PC-3 (cell line): ENCODE measurements at regions of chr7 and their contacts with region 1.

Region 1: DNA sequence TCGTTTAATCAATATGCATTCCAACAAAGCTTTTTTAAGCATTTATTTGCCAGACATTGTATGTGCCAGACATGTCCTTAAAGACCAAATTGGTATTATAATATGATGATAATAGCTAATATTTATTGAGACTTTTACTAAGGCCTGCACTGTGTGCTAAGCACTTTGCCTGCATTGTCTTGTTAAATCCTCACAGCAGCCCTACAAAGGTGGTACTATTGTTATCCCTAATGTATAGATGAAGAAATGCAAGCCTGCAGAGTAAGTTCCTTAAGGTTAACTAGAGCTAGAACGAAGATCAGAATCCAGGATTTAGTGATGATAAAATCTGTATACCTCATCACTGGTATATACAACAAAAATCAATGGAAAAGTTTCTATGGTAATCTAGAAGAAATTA is 5.3 kb upstream of the CAPZA2 start:
- DNase-seq: no peak
- ATAC-seq: no peak
- H3K4me3 ChIP-seq: no peak overlapping the region
- H3K27ac ChIP-seq: no peak overlapping the region
- H3K4me1 ChIP-seq: peaks cover 11% of the 10 kb centered on the region
- H3K27me3 ChIP-seq: no peaks in the 10 kb centered on the region
- CTCF ChIP-seq: no peak

Region 2: GRCh38 chr7:116786791-116787443 is 70.1 kb before region 1 on chr7:
- CTCF ChIA-PET with region 1: no interaction called
- POLR2A ChIA-PET with region 1: interaction called, 11 read pairs
- intact Hi-C with region 1: no loop called
- DNase-seq: peak; percentile 76
- ATAC-seq: peak; percentile 65
- H3K4me3 ChIP-seq: no peak overlapping the region
- H3K27ac ChIP-seq: no peak overlapping the region
- H3K4me1 ChIP-seq: peaks cover 23% of the 10 kb centered on the region
- H3K27me3 ChIP-seq: no peaks in the 10 kb centered on the region
- CTCF ChIP-seq: peak; percentile 67